ENCODE measurements at regions of chr22 and their contacts with region 1.

Region 1: DNA sequence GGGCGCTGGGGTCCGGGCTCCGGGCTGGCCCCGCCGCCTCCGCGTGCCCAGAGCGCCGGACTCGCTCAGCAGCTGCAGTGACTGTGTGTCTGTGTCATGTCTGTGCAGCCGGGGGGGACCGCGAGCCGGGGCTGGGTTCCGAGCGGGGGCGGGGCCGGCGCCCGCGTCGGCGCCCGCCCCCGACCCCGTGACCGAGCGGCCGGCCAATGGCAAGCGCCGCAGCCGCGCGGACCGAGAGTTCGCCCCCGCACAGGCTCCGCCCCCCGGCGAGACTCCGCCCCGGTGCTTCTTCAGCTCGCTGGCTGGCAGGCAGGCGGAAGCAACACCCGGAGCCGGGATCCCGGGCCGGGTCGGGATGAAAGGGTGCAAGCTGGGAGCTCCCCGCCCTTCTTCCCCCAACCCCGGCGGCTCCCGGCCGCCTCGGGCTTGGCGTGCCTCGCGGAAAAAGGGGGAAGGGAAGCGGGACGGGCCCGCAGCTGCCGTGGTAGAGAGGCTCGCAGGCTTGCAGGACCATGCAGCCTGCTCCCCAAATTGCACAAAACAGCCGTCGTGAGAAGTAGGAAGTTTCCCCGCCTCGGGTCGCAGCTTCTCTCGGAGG is 750 bp upstream of the LARGE1 start:
- DNase-seq: peak; percentile 96
- H3K4me3 ChIP-seq: peak overlapping the region; percentile 54 to 86 (median 74)
- H3K27ac ChIP-seq: no peak overlapping the region
- H3K4me1 ChIP-seq: peaks cover 26% of the 10 kb centered on the region
- H3K27me3 ChIP-seq: no peaks in the 10 kb centered on the region
- CTCF ChIP-seq: no peak

Region 2: DNA sequence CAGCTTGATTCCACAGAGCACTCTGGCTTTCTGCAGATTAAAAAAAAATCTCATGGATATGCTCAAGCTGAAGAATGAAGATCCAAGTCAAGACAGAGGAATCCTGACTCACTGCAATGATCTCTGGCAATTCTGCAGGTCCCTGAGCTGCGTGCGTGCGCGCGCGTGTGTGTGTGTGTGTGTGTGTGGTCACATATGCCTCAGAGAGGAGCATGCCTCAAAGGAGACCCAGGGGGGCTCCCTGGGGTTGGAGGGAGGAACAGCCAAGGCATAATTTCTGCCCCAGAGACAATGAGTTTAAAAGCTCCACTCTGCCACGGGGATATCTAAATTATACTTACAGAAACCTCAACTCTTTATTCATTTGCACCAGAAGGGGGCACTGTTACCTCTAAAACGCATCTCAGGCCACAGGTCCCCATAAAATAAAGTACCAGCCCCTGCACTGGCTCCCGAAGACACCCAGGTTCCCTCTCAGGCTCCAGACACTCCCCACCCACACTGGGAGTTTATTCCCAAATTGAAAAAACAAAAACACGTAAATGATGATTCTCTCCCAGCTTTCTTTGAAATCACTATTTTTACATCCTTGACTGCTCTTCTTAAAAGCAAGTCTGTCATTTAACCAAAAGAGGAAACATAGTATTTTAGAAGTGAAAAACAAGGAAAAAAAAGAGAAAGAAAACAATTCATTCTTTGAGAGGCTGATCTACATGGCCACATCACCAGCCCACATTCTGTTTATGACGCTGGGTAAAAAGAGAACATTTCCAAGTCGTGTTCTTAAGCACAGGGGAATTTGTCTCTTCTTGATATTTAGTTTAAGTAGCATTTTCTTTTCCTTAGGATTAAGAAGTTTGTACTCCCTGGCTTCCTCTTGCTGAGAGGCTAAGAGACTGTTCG is 401.7 kb before region 1 on chr22:
- CTCF ChIA-PET with region 1: interaction called, 4 read pairs
- dilution Hi-C with region 1: no loop called
- in situ Hi-C with region 1: no loop called
- intact Hi-C with region 1: loop called (anchors 1 kb)
- DNase-seq: peak; percentile 18
- H3K4me3 ChIP-seq: no peak overlapping the region
- H3K27ac ChIP-seq: no peak overlapping the region
- H3K4me1 ChIP-seq: no peaks in the 10 kb centered on the region
- H3K27me3 ChIP-seq: no peaks in the 10 kb centered on the region
- CTCF ChIP-seq: peak; percentile 21 to 36

Region 3: DNA sequence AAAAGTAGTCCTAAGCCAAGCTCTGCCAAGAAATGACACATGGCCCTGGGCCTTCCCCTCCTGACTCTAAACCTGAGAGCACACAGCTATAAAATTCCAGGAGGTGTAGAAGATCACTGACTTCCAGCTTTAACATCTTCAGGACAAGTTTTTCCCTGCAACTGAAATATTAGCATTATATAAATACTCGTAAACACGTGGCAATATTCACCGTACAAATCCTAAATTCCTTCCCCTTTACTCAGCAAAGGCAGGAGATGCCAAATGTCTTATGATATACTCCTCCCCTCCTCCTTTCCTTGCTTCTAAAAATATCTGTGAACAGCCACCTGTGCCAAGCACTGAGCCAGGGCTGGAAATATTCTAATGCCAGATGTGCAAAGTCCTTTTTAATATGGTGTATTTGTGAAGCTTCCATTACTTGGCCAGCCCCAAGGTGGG is 194.7 kb before region 1 on chr22:
- CTCF ChIA-PET with region 1: no interaction called
- dilution Hi-C with region 1: no loop called
- in situ Hi-C with region 1: no loop called
- intact Hi-C with region 1: loop called (anchors 5 kb)
- DNase-seq: peak; percentile 60
- H3K4me3 ChIP-seq: no peak overlapping the region
- H3K27ac ChIP-seq: no peak overlapping the region
- H3K4me1 ChIP-seq: no peaks in the 10 kb centered on the region
- H3K27me3 ChIP-seq: no peaks in the 10 kb centered on the region
- CTCF ChIP-seq: no peak

Region 4: GRCh38 chr22:33984656-33985285 is 63.7 kb after region 1 on chr22:
- CTCF ChIA-PET with region 1: no interaction called
- dilution Hi-C with region 1: no loop called
- in situ Hi-C with region 1: no loop called
- intact Hi-C with region 1: no loop called
- DNase-seq: no peak
- H3K4me3 ChIP-seq: no peak overlapping the region
- H3K27ac ChIP-seq: no peak overlapping the region
- H3K4me1 ChIP-seq: no peaks in the 10 kb centered on the region
- H3K27me3 ChIP-seq: no peaks in the 10 kb centered on the region
- CTCF ChIP-seq: no peak

Region 5: DNA sequence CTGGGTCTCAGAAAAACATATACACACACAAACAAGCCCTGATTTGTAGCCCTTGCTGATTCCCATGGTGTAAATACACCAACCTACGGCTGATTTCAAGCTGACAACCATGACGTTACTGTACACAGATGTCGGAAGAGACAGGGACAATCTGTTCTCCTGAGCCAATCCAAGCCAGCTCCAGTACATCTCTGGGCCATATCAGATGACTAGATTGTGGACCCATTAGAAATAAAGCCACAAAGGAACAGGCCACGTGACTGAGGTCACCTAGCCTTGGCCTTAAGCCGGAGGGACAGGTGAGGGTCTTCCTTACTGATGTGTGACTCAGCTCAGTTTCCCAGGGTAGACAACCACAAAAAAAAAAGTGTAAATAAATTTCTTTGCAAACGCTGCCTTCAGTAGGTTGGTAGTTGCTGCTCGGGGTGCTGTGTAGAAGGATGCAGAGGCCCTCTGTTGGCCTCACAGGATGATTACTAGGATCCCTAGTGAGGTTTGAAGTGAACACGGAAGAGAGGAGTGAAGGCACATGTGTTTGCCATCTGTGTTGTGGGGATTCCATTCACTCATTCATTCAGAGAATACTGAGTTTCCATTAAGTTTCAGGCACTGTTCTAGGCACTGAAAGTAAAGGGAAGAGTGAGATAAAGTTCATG is 98.3 kb after region 1 on chr22:
- CTCF ChIA-PET with region 1: no interaction called
- dilution Hi-C with region 1: no loop called
- in situ Hi-C with region 1: no loop called
- intact Hi-C with region 1: loop called (anchors 1 kb)
- DNase-seq: no peak
- H3K4me3 ChIP-seq: no peak overlapping the region
- H3K27ac ChIP-seq: no peak overlapping the region
- H3K4me1 ChIP-seq: no peaks in the 10 kb centered on the region
- H3K27me3 ChIP-seq: no peaks in the 10 kb centered on the region
- CTCF ChIP-seq: no peak

Region 6: DNA sequence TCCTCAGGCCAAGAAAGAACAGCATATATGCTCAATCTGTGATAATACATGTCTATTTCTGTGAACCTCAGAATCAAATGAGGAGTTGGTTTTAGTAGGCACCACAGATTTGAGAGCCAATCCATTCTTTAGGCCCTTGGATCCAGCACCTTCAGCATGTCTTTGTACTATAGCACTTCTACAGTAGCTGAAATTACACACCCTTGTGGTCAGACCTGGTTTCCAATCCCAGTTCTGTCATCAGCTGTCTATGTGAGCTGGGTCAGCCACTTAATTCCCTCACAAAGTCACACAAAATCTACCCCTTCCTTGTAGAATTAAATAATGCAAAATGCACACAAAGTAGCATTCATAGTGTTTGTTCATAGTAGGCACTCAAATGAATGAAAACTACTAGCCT is 380.5 kb after region 1 on chr22:
- CTCF ChIA-PET with region 1: no interaction called
- dilution Hi-C with region 1: no loop called
- in situ Hi-C with region 1: no loop called
- intact Hi-C with region 1: no loop called
- DNase-seq: no peak
- H3K4me3 ChIP-seq: no peak overlapping the region
- H3K27ac ChIP-seq: no peak overlapping the region
- H3K4me1 ChIP-seq: no peaks in the 10 kb centered on the region
- H3K27me3 ChIP-seq: no peaks in the 10 kb centered on the region
- CTCF ChIP-seq: no peak

Region 7: GRCh38 chr22:34414484-34415440 is 493.7 kb after region 1 on chr22:
- CTCF ChIA-PET with region 1: no interaction called
- dilution Hi-C with region 1: no loop called
- in situ Hi-C with region 1: no loop called
- intact Hi-C with region 1: loop called (anchors 10 kb)
- DNase-seq: peak; percentile 73
- H3K4me3 ChIP-seq: no peak overlapping the region
- H3K27ac ChIP-seq: no peak overlapping the region
- H3K4me1 ChIP-seq: no peaks in the 10 kb centered on the region
- H3K27me3 ChIP-seq: no peaks in the 10 kb centered on the region
- CTCF ChIP-seq: peak; percentile 75 to 83